ENCODE measurements at regions of chr11 and their contacts with region 1.

Region 1: GRCh38 chr11:109946322-109946846 is 146.8 kb upstream of the ZC3H12C start:
- DNase-seq: peak; percentile 91
- ATAC-seq: peak; percentile 98

Region 2: DNA sequence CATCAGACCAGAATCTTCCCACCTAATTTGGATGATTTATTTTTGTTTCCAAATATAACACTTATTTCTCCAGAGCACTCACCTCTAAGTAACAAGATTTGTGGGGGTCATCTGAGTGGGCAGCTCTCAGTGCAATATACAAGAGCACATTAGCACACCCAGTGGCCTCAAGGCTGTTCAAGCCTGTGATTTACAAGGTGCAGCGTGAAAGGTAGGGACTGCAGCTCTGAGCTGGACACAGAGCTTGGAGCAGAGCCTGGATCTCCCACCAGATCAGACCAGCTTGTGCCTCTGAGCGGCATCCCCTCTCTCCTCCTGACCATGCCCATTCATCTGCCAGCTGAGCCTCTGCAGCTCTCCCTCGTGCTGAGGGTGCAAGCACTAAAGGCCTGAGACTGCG is 176.5 kb before region 1 on chr11:
- intact Hi-C with region 1: no loop called
- DNase-seq: no peak
- ATAC-seq: no peak

Region 3: GRCh38 chr11:109798521-109798920 is 147.9 kb before region 1 on chr11:
- intact Hi-C with region 1: no loop called
- DNase-seq: no peak
- ATAC-seq: no peak

Region 4: GRCh38 chr11:110092515-110093404 is 146.4 kb after region 1 on chr11 and contains the start of gene ZC3H12C:
- intact Hi-C with region 1: loop called (anchors 2 kb)
- DNase-seq: peak; percentile 88
- ATAC-seq: peak; percentile 90
- total RNA-seq, gene ZC3H12C: 18.0 TPM

Region 5: DNA sequence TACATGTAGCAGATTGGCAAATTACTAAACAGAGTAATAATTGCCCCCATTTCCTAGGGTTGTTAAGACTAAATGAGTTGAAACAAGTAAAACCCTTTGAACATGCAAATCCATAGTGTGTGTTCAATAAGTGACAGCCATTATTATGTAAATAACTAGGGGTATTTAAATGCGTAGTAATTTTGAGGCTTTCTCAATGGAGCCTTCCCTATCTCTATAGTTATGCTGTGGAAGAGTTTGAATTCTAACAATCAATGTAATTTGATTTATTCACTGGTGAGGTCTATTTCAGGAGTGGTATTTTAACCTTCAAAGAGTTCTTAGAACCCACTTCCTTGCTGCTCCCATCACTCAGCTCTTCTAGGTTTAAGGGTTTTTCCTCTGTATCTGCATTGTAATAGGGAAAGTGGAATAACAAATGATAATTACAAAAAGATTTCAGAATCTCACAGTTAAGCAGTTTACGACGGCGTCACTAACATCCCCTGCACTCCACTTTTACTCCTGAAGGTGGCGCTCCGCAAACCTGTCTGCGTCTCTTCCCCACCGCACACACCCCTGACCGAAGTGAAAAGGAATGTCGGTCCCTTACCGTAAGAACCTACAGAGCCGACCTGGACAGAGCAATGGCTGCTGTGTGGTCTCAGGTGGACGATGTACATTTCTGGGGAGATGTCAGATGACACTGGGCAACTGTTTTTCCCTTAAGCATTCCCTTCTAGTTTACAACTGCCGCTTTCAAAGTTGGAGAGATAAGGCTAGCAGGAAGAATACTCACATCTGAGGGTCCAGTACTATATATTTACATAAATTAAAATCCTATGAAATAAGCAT is 227.6 kb after region 1 on chr11:
- intact Hi-C with region 1: loop called (anchors 10 kb)
- DNase-seq: no peak
- ATAC-seq: peak; percentile 76

Region 6: DNA sequence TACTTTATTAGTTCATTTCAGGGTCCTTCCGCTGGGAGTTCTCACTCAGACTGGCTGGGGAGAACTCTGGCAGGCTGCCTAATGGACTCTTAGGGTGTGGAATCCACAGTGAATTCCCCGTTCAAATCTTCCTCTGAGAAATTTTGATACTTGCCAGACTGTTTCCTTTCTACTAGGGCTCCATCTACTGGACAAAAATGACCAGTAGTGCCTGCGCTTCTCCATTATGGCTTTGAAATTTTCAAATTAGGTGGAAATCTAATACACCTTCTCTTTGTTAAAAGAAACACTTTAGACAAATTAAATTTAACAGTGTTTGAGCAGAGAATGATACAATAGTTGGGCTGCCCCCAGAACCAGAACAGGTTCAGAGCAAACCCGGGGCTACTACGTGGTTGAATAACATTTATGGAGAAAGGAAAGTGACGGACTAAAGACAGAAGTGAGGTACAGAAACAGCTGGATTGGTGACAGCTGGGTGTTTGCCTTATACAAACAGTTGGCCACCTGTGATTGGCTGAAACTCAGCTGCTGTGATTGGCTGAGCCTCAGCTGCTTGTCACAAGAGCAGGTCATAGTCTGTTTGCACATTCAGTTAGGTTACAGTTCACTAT is 430.4 kb after region 1 on chr11:
- intact Hi-C with region 1: loop called (anchors 5 kb)
- DNase-seq: peak; percentile 68
- ATAC-seq: peak; percentile 83